HEK293 (cell line): ENCODE measurements at regions of chr10 and their contacts with region 1.

Region 1: GRCh38 chr10:93541402-93542357 is 24.8 kb upstream of the FFAR4 start:
- H3K4me3 ChIP-seq: peak overlapping the region; percentile 37
- H3K27ac ChIP-seq: no peak overlapping the region
- H3K4me1 ChIP-seq: no peaks in the 10 kb centered on the region
- CTCF ChIP-seq: peak; percentile 78

Region 2: DNA sequence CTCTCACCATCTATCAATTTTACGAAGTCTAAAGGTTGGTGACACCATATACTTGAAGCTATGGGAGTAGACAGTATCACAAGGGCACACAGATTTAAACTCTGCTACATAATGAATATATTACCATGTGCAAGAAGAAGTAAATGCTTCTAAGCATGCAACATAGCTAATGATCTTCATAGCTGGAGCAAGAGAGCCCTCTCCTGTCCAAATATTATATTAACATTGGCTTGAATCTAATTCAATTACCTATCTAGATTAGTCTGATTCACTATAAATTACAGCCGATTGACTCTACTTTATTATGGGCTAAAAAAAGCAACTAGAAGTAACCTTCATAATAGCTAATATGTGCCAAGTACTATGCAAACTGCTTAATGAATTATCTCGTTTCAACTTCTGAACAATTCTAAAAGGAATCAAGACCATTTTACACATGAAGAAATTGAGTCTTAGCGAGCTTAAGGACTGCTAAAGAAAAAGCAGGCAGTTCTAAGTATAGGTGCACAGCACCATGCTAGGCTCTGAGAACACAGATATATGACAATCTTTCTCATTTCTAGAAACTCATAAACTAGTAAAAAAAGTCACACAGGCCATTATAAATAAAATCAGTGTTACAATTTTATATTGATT is 138.8 kb after region 1 on chr10:
- CTCF ChIA-PET with region 1: interaction called, 18 read pairs
- POLR2A ChIA-PET with region 1: no interaction called
- H3K4me3 ChIP-seq: no peak overlapping the region
- H3K27ac ChIP-seq: no peak overlapping the region
- H3K4me1 ChIP-seq: no peaks in the 10 kb centered on the region
- CTCF ChIP-seq: 0 out of 2 replicates have a peak, but pooled peaks have one; percentile 13